Cardiac septum (tissue), 1 donor: ENCODE measurements at regions of chr16 and their contacts with region 1.

Region 1: DNA sequence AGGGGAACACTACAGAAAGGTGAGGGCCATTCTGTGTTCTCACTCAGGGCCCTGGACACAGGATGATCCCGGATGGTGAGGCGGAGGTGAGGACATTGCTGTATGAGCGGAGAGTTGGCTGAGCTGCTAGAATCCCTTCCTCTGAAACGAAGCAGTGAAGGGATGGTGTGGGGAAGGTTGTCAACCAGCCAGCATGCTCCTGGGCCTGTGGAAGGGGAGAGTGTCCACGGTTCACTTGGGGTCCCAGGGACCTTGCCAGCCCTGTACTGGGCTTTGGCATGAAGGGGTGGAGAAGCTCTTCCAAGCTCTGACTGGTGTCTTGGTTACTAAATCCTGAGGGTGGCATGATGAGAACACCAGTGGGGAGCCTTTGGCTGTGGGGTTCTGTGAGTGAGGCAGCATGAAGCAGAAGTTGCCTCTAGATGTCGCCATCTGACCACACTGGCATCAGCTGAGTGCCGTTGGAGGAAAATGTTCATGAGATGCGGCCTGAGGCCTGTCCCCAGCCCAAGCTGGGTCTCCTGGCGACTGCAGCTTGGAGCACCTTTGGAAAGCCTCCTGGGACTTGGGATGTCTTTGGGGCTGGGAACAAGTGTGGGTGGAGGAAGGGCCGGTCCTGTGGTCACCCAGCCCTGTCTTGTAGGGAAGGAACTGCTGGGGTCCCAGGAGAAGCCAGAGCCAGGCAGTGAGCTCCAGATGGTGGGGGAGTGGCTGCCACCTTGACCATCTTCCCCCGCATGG is 14.8 kb downstream of the PDP2 start:
- DNase-seq: no peak

Region 2: GRCh38 chr16:65940711-65941110 is 954.4 kb before region 1 on chr16:
- intact Hi-C with region 1: no loop called
- DNase-seq: no peak

Region 3: GRCh38 chr16:66618588-66619375 is 276.3 kb before region 1 on chr16:
- intact Hi-C with region 1: no loop called
- DNase-seq: no peak

Region 4: GRCh38 chr16:66947302-66948065 is 52.4 kb after region 1 on chr16:
- intact Hi-C with region 1: loop called (anchors 1 kb)
- DNase-seq: no peak